A549 (cell line): ENCODE measurements at regions of chr1 and their contacts with region 1.

Region 1: GRCh38 chr1:171644805-171645483 is 7.5 kb downstream of the MYOC start:
- DNase-seq: peak; percentile 58 to 91
- ATAC-seq: peak; percentile 92 to 95
- H3K4me3 ChIP-seq: no peak overlapping the region
- H3K27ac ChIP-seq: peak overlapping the region in 1 of 2 experiments; percentile 55; a peak in 1 of 6 replicates
- H3K4me1 ChIP-seq: no peaks in the 10 kb centered on the region
- CTCF ChIP-seq: peak; percentile 79
- EP300 ChIP-seq: no peak
- POLR2A ChIP-seq: no peak
- RAD21 ChIP-seq: peak; percentile 76 to 83

Region 2: DNA sequence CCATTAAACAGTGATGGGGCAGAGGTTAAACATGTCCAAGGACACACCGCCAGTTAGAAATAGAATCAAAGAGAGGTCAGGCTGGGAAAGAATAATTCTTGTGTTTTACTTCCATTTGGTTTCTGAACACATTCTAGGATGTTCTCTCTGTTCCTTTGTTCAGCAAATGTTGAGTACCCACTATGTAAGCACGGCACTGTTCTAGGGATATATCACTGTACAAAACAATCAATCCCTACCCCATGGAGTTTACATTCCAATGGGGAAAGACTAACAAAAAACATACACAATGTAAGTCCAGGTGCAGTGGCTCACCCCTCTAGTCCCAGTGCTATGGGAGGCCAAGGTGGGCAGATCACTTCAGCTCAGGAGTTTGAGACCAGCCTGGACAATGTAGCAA is 16.7 kb before region 1 on chr1:
- CTCF ChIA-PET with region 1: interaction called, 24 read pairs
- POLR2A ChIA-PET with region 1: no interaction called
- DNase-seq: no peak
- ATAC-seq: no peak
- H3K4me3 ChIP-seq: no peak overlapping the region
- H3K27ac ChIP-seq: no peak overlapping the region
- H3K4me1 ChIP-seq: no peaks in the 10 kb centered on the region
- CTCF ChIP-seq: no peak
- EP300 ChIP-seq: no peak
- POLR2A ChIP-seq: no peak
- RAD21 ChIP-seq: no peak

Region 3: GRCh38 chr1:171654942-171655745 is 10.2 kb after region 1 on chr1:
- CTCF ChIA-PET with region 1: interaction called, 48 read pairs
- POLR2A ChIA-PET with region 1: no interaction called
- DNase-seq: peak; percentile 18 to 57
- ATAC-seq: peak; percentile 44 to 88; a peak in 4 of 6 replicates
- H3K4me3 ChIP-seq: no peak overlapping the region
- H3K27ac ChIP-seq: no peak overlapping the region
- H3K4me1 ChIP-seq: peaks cover 16% of the 10 kb centered on the region; the same call in 2 of the 3 replicates
- CTCF ChIP-seq: peak; percentile 38; the same call in 2 of the 3 replicates
- EP300 ChIP-seq: no peak
- POLR2A ChIP-seq: no peak
- RAD21 ChIP-seq: peak in 1 of 2 experiments; percentile 35; a peak in 2 of 5 replicates

Region 4: DNA sequence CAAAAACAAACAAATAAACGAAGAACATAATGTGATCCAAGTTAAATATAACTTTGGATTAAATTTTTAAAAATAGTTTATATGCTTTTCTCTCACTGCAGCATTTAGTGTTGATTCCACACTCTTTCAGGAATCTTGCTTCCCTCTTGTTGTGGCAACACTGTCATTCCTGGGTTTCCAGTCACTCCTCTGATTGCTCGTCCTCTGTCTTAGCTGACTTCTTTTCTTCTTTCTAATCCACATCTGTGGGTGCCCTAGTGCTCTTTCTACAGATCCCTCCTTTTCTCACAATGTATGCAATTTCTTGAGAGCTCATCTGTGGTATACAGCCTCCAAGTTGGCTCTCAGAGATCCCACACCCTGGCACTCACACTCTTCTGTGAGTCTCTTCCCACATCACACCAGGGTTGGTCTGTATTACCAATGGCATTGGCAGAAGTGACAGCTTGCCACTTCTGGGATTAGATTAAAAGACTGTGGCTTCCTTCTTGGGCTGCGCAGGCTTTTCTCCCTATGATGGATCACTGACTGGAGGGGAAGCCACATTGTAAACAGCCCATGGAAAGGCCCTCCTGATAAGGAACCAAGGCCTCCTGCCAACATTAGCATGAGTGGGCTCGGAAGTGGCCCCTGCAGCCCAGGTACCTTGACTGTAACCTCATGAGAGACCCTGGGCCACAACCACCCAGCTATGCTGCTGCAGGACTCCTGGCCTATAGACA is 19.1 kb after region 1 on chr1:
- CTCF ChIA-PET with region 1: interaction called, 48 read pairs
- POLR2A ChIA-PET with region 1: no interaction called
- DNase-seq: no peak
- ATAC-seq: no peak
- H3K4me3 ChIP-seq: no peak overlapping the region
- H3K27ac ChIP-seq: no peak overlapping the region
- H3K4me1 ChIP-seq: no peaks in the 10 kb centered on the region
- CTCF ChIP-seq: no peak
- EP300 ChIP-seq: no peak
- POLR2A ChIP-seq: no peak
- RAD21 ChIP-seq: no peak

Region 5: DNA sequence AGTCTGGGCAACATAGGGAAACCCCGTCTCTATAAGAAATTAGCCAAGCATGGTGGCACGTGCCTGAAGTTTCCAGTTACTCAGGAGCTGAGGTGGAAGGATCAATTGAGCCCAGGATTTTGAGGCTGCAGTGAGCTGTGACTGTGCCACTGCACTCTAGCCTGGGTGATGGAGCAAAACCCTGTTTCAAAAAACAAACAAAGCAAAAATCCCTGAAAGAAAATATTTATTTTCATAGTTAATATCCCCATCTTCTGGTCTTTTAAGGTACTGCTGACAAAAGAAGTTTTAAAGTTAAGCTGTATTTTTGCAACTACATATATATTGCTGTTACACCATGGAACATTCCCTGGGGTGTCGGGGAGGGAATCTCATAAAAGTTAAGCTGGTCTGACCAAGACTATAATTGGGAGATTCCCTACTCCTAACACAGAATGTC is 70.9 kb after region 1 on chr1:
- CTCF ChIA-PET with region 1: interaction called, 48 read pairs
- POLR2A ChIA-PET with region 1: no interaction called
- DNase-seq: peak in 1 of 2 experiments; percentile 7
- ATAC-seq: peak in 1 of 2 experiments; percentile 47; a peak in 3 of 6 replicates
- H3K4me3 ChIP-seq: no peak overlapping the region
- H3K27ac ChIP-seq: no peak overlapping the region
- H3K4me1 ChIP-seq: no peaks in the 10 kb centered on the region
- CTCF ChIP-seq: peak; percentile 63
- EP300 ChIP-seq: no peak
- POLR2A ChIP-seq: no peak
- RAD21 ChIP-seq: peak; percentile 64

Region 6: GRCh38 chr1:171741872-171742576 is 97.1 kb after region 1 on chr1 and contains the start of gene VAMP4:
- CTCF ChIA-PET with region 1: interaction called, 16 read pairs
- POLR2A ChIA-PET with region 1: no interaction called
- DNase-seq: peak; percentile 74 to 83
- ATAC-seq: peak; percentile 95 to 96
- H3K4me3 ChIP-seq: peak within 1 kb of the TSS; percentile 82
- H3K27ac ChIP-seq: peak within 1 kb of the TSS; percentile 87 to 94
- H3K4me1 ChIP-seq: peaks cover 23% of the 10 kb centered on the region; the same call in 2 of the 3 replicates
- CTCF ChIP-seq: no peak
- EP300 ChIP-seq: no peak
- POLR2A ChIP-seq: peak; percentile 63
- RAD21 ChIP-seq: 0 out of 5 replicates have a peak, but pooled peaks of 1 of the 2 experiments have one; percentile 12
- polyA plus RNA-seq, gene VAMP4: 6.6 and 9.3 TPM in 2 replicates